ENCODE measurements at regions of chr3 and their contacts with region 1.

Region 1: DNA sequence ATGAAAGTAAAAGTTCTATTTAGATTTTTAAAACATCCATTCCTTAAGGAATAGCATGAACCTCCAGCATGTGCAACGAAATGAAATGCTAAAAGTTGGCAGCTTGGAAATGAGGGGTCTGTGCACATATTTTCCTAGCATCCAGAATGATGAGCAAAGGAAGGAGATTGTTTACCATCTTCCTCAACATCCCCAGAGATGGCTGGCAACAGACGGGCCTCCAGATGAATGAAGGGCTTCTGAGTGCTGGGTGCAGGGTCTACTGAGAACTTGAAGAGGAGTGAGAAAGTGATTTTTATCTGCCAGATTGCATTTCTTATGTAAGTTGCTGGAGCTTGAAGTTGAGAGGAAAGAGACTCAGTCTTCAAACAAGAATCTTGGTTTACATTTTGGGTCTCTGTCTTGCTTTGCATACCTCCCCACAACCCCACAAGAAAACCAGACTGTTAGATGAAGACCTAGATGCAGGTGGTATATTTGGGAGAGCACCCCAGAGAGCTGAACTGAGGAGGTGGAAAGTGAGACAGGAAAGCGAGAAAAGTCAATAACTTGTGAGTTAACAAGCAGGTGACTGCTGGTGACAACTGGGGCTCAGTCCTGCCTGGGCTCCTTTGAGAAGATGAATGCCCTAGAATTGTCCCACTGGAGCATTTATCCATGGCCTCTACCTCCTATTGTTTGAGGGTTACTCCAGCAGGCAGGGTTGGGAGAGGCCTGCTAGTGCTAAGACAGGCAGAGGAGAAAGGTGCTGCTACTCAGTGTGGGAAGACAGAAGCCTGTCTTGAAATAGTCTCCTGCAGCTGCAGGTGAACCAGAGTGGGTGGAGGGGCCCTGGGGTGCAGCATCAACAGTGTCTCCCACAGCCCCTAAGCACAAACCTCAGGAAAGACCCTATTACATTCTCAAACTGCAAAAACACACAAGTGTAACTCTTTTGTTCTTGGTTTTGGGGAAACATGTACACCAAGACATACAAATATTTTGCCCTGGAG is 10.5 kb upstream of the CCK start:
- DNase-seq: no peak
- ATAC-seq: no peak
- H3K4me3 ChIP-seq: no peak overlapping the region
- H3K27ac ChIP-seq: no peak overlapping the region
- H3K4me1 ChIP-seq: no peaks in the 10 kb centered on the region
- H3K27me3 ChIP-seq: peaks cover 0 to 14% (median 2%) of the 10 kb centered on the region in 7 donors
- CTCF ChIP-seq: no peak

Region 2: DNA sequence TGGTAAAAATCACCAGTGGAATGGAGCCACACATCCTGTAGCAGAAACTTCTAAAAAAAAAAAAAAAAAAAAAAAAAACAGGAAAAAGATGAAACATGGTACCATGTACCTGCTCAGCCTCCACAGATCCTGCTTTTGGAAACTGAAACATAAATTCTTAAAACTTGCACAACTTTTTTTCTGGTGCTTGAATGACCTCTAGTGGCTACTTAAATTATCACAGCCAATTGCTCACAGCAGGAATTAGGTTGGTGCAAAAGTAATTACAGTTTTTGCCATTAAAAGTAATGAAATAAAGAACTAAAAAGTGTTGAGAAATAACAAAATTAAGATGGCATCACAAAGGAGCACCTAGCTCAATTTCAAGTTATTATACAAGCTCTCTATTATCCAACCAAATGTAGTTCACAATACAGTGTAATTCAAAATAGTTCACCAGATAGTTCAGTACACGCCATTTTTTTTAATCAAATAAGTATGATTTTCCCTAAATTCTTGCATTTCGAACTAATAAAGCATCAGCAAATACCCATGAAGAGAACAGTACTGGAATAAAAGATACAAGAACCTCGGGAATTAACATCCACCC is 395.1 kb before region 1 on chr3:
- intact Hi-C with region 1: no loop called
- DNase-seq: peak in 1 of 2 donors; percentile 23
- ATAC-seq: no peak
- H3K4me3 ChIP-seq: no peak overlapping the region
- H3K27ac ChIP-seq: no peak overlapping the region
- H3K4me1 ChIP-seq: no peaks in the 10 kb centered on the region
- H3K27me3 ChIP-seq: no peaks in the 10 kb centered on the region
- CTCF ChIP-seq: peak; percentile 47 to 81 (median 76)

Region 3: GRCh38 chr3:42425736-42426407 is 149.4 kb after region 1 on chr3:
- intact Hi-C with region 1: loop called in 1 of 10 experiments (anchors 10 kb)
- DNase-seq: no peak
- ATAC-seq: no peak
- H3K4me3 ChIP-seq: no peak overlapping the region
- H3K27ac ChIP-seq: no peak overlapping the region
- H3K4me1 ChIP-seq: peaks cover 0 to 8% (median 0%) of the 10 kb centered on the region in 9 donors
- H3K27me3 ChIP-seq: peaks cover 0 to 5% (median 0%) of the 10 kb centered on the region in 7 donors
- CTCF ChIP-seq: no peak